H1 (cell line): ENCODE measurements at regions of chr1 and their contacts with region 1.

Region 1: GRCh38 chr1:11893907-11894251 is 32.3 kb downstream of the KIAA2013 start:
- DNase-seq: peak in 1 of 2 experiments; percentile 93
- H3K4me3 ChIP-seq: no peak overlapping the region
- H3K27ac ChIP-seq: no peak overlapping the region
- H3K4me1 ChIP-seq: no peaks in the 10 kb centered on the region; a peak in 3 of 7 replicates
- H3K27me3 ChIP-seq: no peaks in the 10 kb centered on the region
- CTCF ChIP-seq: peak; percentile 97 to 98 (median 98)
- EP300 ChIP-seq: no peak
- POLR2A ChIP-seq: no peak
- RAD21 ChIP-seq: peak; percentile 91 to 96

Region 2: GRCh38 chr1:11831945-11832725 is 61.7 kb before region 1 on chr1:
- CTCF ChIA-PET with region 1: interaction called, 67 read pairs
- POLR2A ChIA-PET with region 1: interaction called, 3 read pairs
- DNase-seq: no peak
- H3K4me3 ChIP-seq: no peak overlapping the region
- H3K27ac ChIP-seq: no peak overlapping the region
- H3K4me1 ChIP-seq: no peaks in the 10 kb centered on the region
- H3K27me3 ChIP-seq: no peaks in the 10 kb centered on the region
- CTCF ChIP-seq: no peak
- EP300 ChIP-seq: no peak
- POLR2A ChIP-seq: no peak
- RAD21 ChIP-seq: no peak

Region 3: GRCh38 chr1:11845641-11846335 is 48.1 kb before region 1 on chr1:
- CTCF ChIA-PET with region 1: interaction called, 67 read pairs
- POLR2A ChIA-PET with region 1: interaction called, 3 read pairs
- DNase-seq: no peak
- H3K4me3 ChIP-seq: no peak overlapping the region
- H3K27ac ChIP-seq: no peak overlapping the region
- H3K4me1 ChIP-seq: no peaks in the 10 kb centered on the region
- H3K27me3 ChIP-seq: no peaks in the 10 kb centered on the region
- CTCF ChIP-seq: peak in 1 of 3 experiments; percentile 18; a peak in 1 of 4 replicates
- EP300 ChIP-seq: no peak
- POLR2A ChIP-seq: no peak
- RAD21 ChIP-seq: no peak

Region 4: DNA sequence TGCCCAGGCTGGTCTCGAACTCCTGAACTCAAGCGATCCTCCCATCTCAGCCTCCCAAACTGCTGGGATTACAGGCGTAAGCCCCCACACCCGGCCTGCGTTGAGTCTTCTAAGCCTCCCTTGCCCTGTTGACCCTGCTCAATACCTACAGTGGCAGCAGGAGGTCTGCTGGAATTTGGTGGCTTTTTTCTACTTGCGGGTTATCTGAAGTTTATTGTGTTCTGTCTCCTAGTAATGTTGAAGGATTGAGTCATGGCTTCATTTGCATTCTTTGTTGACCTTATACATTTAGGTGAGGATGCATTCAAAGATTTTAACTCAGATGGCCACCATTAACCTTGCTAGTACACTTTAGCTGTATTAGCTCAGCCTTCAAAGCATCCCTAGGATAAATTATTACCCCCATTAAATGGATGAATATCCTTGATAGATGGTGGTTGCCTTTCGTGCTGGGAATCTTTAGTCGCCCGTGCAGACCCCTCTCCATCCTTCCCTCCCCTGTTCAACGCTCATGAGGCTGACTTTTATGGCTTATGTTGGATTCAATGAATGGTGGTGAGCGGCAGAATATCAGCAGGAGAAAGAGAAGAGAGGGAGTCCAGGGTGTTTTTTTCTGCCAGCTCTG is 25.4 kb before region 1 on chr1:
- CTCF ChIA-PET with region 1: interaction called, 32 read pairs
- POLR2A ChIA-PET with region 1: no interaction called
- DNase-seq: no peak
- H3K4me3 ChIP-seq: no peak overlapping the region
- H3K27ac ChIP-seq: no peak overlapping the region
- H3K4me1 ChIP-seq: no peaks in the 10 kb centered on the region
- H3K27me3 ChIP-seq: no peaks in the 10 kb centered on the region; a peak in 2 of 7 replicates
- CTCF ChIP-seq: no peak
- EP300 ChIP-seq: no peak
- POLR2A ChIP-seq: no peak
- RAD21 ChIP-seq: no peak

Region 5: DNA sequence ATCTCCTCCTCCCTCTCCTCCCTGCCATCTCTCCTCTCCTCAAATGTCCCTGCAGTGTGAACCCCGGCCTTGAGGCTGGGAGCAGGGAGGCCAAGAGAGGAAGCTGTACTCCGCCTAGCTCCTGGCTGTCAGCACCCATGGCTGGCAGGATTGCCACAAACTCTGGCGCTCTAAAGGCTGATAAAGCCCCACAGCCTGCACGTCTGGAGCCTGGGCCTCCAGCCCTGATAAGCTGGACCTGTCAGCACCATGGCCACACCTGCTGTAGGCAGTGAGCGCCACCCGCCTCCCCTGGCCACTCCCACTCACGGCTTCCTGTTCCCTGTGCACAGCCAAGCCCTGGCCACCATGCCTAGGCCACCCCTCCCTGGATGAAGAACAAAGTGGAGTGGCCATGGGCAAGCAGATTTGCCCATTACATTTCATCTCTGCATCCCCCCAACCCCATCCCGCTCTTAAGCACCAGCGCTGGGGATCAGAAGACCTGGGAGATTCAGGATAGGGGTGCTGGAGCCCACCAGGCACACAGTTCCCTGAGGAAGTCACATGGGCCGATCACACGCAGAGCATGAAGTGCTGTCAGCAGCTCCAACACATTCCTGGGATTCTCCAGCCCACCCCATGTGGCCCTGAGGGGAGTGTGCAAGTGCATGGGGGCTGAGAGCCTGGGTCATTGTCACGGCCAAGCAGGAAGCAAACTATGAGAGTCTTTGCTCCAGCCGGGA is 10.9 kb before region 1 on chr1:
- CTCF ChIA-PET with region 1: interaction called, 19 read pairs
- POLR2A ChIA-PET with region 1: interaction called, 5 read pairs
- DNase-seq: no peak
- H3K4me3 ChIP-seq: no peak overlapping the region
- H3K27ac ChIP-seq: no peak overlapping the region
- H3K4me1 ChIP-seq: peaks cover 0 to 10% (median 8%) of the 10 kb centered on the region in 4 experiments; a peak in 6 of 7 replicates
- H3K27me3 ChIP-seq: no peaks in the 10 kb centered on the region
- CTCF ChIP-seq: no peak
- EP300 ChIP-seq: no peak
- POLR2A ChIP-seq: no peak
- RAD21 ChIP-seq: no peak

Region 6: DNA sequence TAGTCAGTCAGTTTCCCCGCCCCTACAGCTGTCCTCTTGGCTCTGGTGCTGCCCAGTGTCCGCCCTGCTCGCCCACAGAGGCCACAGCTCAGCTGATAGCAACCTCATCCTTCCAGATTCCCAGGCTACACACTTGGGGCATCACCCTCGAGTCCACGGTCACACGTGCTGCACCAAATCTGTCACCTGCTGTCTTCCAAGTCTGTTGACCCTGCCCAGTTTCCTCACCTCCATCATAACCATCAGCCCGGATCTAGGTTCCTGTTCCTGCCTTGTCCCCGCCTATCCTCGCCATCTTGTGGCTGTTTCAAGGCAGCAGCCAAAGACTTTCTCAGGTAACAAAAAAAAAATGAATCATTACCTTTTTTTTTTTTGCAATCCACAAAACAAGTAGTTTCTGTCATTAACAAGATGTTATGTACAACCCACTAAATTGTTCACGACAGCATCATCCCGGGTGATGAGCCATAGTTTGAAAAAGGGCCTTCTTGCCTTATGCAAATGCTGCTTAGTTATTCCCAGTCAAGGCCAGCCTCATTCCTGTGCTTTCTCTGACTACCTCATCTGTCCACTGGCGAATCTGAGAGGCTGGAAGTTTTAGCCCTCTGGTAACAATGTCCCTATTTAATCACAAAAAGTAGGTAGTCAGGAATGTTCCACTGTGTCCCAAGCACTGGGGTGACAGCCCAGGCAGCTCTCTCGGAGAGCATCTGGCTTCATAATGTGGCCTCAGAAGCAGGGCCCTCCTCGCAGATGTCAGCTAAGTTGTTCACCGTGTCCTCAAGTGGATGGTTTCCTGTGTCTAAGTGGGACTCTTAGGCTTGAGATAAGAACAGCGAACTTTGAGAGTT is 120.5 kb after region 1 on chr1:
- CTCF ChIA-PET with region 1: no interaction called
- POLR2A ChIA-PET with region 1: no interaction called
- DNase-seq: no peak
- H3K4me3 ChIP-seq: no peak overlapping the region
- H3K27ac ChIP-seq: 0 out of 2 replicates have a peak overlapping the region, but pooled peaks have one; percentile 7
- H3K4me1 ChIP-seq: no peaks in the 10 kb centered on the region
- H3K27me3 ChIP-seq: no peaks in the 10 kb centered on the region
- CTCF ChIP-seq: peak; percentile 38 to 45 (median 44)
- EP300 ChIP-seq: no peak
- POLR2A ChIP-seq: no peak
- RAD21 ChIP-seq: peak in 1 of 2 experiments; percentile 45; a peak in 2 of 4 replicates